Dendritic cell treated with granulocyte-macrophage colony-stimulating factor and Interleukin-4, amounts not matched to agents 40 ng/mL and 50 ng/mL, for 4 days (primary cell): ENCODE measurements at regions of chr11 and their contacts with region 1.

Region 1: DNA sequence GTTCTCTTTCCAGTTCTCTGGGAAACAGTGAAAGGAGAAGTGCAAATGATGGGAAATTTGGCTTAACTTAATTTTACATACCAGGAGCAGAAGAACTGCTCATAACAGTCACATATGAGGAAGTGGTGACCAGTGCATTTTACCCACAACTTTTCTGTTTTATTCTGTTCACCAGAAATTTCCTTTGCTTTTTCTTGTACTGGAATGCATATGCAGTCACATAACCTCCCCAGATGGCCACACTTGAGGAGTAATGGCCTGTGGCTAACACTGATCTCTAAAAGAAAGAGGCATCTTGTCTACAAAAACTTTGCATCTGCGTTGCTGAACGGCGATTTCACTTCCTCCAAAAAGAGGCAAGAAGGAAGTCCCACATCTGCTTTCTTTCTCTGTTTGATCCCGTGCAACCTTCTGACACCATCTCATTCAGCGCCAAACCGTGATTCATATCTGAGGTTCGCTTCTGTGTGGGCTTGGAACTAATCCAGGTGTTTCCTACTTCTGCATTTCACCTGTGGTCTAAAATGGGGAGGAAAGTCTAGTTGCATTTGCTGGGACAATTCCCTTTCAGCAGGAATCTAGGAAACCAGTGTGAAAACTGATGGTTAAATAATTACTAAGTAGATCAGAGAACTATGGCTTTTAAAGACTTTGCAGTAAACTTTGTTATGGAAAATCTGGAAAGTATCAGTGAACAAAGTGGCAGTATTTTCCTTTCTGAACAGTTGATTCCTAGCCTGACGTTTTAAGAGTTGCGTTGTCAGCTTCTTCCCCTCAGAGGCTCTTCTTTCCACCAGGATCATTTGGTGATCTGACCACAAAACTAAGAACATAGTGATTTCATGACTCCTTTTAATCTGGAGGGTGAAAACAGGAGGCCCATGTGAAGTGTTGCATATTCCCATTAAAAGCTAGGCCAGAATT is 4.2 kb upstream of the MPEG1 start:
- H3K4me3 Mint-ChIP-seq: peak overlapping the region; percentile 23
- H3K27ac Mint-ChIP-seq: peak overlapping the region; percentile 89
- H3K4me1 Mint-ChIP-seq: peaks cover 77% of the 10 kb centered on the region
- H3K27me3 Mint-ChIP-seq: no peaks in the 10 kb centered on the region

Region 2: GRCh38 chr11:58980159-58980843 is 236.6 kb before region 1 on chr11:
- intact Hi-C with region 1: no loop called
- H3K4me3 Mint-ChIP-seq: no peak overlapping the region
- H3K27ac Mint-ChIP-seq: no peak overlapping the region
- H3K4me1 Mint-ChIP-seq: no peaks in the 10 kb centered on the region
- H3K27me3 Mint-ChIP-seq: no peaks in the 10 kb centered on the region

Region 3: GRCh38 chr11:59247531-59248227 is 30.8 kb after region 1 on chr11:
- intact Hi-C with region 1: loop called (anchors 5 kb)
- H3K4me3 Mint-ChIP-seq: no peak overlapping the region
- H3K27ac Mint-ChIP-seq: peak overlapping the region; percentile 71
- H3K4me1 Mint-ChIP-seq: peaks cover 53% of the 10 kb centered on the region
- H3K27me3 Mint-ChIP-seq: no peaks in the 10 kb centered on the region

Region 4: DNA sequence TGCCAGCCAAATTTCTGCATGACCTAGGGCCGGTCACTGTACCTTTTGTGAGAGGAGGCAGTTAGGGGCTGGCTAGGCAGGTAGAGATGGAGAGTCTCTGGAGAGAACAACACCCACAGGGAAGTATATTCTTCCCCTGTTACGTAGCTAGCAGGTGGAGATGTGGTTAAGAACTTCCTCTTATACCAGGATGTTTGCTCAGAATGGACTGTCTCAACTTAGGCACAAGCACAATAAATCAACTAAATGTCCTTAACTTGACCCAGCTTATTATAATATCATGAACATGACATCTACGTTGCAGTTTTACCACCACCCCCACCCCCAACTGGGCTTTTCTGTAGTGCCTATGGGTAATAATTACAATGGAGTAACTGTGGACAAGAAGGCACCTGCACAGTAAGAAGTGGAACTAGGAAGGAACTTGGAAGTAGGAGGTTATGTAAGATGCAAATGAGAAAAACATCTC is 56.5 kb after region 1 on chr11:
- intact Hi-C with region 1: loop called (anchors 5 kb)
- H3K4me3 Mint-ChIP-seq: no peak overlapping the region
- H3K27ac Mint-ChIP-seq: peak overlapping the region; percentile 61
- H3K4me1 Mint-ChIP-seq: peaks cover 69% of the 10 kb centered on the region
- H3K27me3 Mint-ChIP-seq: peaks cover 1% of the 10 kb centered on the region